OCI-LY7 (cell line): ENCODE measurements at regions of chr5 and their contacts with region 1.

Region 1: GRCh38 chr5:43602461-43603343 is at the start of gene NNT:
- DNase-seq: peak; percentile 84
- H3K4me3 ChIP-seq: peak within 1 kb of the TSS; percentile 86
- H3K27ac ChIP-seq: peak within 1 kb of the TSS; percentile 60
- H3K4me1 ChIP-seq: peaks cover 24% of the 10 kb centered on the region
- CTCF ChIP-seq: no peak
- total RNA-seq, gene NNT: 33.6 and 42.2 TPM in 2 replicates

Region 2: DNA sequence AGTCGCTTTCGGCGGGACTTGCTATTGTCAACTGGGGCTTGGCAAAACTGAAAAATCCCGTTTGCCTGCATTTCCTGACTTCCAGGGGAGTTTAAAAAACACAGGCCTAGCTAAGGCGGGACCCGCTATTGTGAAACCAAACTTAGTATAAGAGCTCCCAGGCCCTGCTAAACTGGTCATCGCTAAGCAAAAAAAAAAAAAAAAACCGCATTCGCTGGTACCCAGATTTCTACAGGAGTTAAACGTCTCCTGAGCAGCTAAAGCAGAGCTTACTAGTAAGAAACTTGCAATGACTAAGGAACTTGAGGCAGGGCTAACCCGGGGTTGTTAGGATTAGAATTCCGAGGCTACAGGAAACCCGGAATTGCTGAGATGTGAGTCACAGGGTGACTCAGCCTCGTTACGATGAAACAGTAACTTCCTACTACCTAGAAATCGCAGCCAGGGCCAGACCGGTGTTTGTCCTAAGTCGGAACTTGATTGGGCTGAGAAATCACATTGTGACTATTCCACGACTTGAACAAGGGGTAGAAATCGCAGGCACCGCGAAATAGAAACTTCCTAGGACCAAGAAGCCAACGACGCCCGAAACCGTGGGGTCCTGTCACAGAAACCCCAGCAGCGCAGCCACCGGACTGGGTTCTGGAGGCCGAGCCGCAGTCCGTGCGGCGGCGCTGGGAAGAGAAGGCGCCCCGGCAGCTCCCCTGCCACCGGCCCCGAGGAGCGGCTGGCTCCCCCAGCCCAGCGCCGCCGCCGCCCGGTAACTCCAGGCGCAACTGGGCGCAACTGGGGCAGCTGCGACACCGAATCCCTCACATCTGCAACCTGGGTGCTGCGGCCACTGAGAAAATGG is 652.0 kb before region 1 on chr5:
- CTCF ChIA-PET with region 1: interaction called, 11 read pairs
- POLR2A ChIA-PET with region 1: no interaction called
- intact Hi-C with region 1: no loop called
- DNase-seq: peak; percentile 36
- H3K4me3 ChIP-seq: peak overlapping the region; percentile 68
- H3K27ac ChIP-seq: no peak overlapping the region
- H3K4me1 ChIP-seq: peaks cover 28% of the 10 kb centered on the region
- CTCF ChIP-seq: no peak

Region 3: DNA sequence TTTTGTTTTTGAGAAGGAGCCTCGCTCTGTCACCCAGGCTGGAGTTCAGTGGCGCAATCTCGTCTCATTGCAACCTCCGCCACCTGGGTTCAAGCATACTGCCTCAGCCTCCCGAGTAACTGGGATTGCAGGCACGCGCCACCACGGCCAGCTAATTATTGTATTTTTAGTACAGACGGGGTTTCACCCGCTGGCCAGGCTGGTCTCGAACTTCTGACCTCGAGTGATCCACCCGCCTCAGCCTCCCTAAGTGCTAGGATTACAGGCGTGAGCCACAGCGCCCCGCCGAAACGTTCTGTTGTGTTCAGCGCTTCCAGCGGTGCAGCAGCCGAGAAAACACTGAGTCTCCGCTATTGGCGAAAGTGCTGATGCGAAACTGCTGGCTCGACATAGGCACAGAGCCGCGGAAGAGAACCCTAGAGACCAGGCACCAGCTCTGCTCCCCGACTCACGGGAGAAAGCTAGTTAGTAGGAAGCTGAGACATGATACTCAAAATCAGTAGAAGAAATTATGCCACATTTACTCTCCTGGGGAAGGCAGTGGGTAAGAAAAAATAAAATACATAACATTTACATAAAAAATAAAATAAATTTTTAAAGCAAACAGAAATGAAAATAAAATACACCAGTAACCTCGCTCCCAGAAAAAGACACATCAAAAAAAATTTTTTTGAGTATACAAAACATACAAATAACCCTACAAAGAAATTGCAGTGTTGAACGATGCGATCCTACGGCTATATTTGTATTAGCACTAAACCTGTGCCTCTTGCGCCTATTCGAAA is 594.1 kb before region 1 on chr5:
- CTCF ChIA-PET with region 1: no interaction called
- POLR2A ChIA-PET with region 1: no interaction called
- intact Hi-C with region 1: loop called (anchors 5 kb)
- DNase-seq: peak; percentile 96
- H3K4me3 ChIP-seq: peak overlapping the region; percentile 70
- H3K27ac ChIP-seq: peak overlapping the region; percentile 86
- H3K4me1 ChIP-seq: peaks cover 32% of the 10 kb centered on the region
- CTCF ChIP-seq: peak; percentile 66

Region 4: DNA sequence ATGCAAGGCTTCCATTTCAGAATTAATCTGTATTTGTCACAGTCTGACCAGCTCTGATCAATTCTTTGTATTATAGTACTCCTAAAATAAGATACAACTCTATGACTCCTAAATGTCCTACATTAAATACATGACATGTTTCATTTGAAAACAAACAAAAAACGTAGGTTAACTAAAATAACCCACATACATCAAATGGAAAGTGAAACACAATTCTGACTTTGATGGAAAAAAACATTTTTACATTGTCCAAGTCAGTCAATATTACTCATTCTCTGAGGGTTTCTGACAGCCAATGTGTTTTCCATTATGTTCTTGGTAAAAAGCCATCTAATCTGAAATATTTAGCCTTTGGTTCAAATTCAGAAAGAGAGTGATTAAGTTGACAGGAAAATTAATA is 298.2 kb before region 1 on chr5:
- CTCF ChIA-PET with region 1: no interaction called
- POLR2A ChIA-PET with region 1: no interaction called
- intact Hi-C with region 1: loop called (anchors 5 kb)
- DNase-seq: no peak
- H3K4me3 ChIP-seq: no peak overlapping the region
- H3K27ac ChIP-seq: no peak overlapping the region
- H3K4me1 ChIP-seq: peaks cover 27% of the 10 kb centered on the region
- CTCF ChIP-seq: no peak

Region 5: GRCh38 chr5:43336159-43336558 is 266.5 kb before region 1 on chr5:
- CTCF ChIA-PET with region 1: no interaction called
- POLR2A ChIA-PET with region 1: no interaction called
- intact Hi-C with region 1: no loop called
- DNase-seq: no peak
- H3K4me3 ChIP-seq: no peak overlapping the region
- H3K27ac ChIP-seq: no peak overlapping the region
- H3K4me1 ChIP-seq: no peaks in the 10 kb centered on the region
- CTCF ChIP-seq: no peak

Region 6: GRCh38 chr5:43556857-43557542 is 45.7 kb before region 1 on chr5 and contains the start of gene PAIP1:
- CTCF ChIA-PET with region 1: no interaction called
- POLR2A ChIA-PET with region 1: interaction called, 11 read pairs
- intact Hi-C with region 1: loop called (anchors 1 kb)
- DNase-seq: peak; percentile 89
- H3K4me3 ChIP-seq: peak within 1 kb of the TSS; percentile 75
- H3K27ac ChIP-seq: peak within 1 kb of the TSS; percentile 77
- H3K4me1 ChIP-seq: peaks cover 35% of the 10 kb centered on the region
- CTCF ChIP-seq: peak; percentile 80
- total RNA-seq, gene PAIP1: 52.8 and 69.2 TPM in 2 replicates